B cell (primary cell): ENCODE measurements at regions of chr3 and their contacts with region 1.

Region 1: DNA sequence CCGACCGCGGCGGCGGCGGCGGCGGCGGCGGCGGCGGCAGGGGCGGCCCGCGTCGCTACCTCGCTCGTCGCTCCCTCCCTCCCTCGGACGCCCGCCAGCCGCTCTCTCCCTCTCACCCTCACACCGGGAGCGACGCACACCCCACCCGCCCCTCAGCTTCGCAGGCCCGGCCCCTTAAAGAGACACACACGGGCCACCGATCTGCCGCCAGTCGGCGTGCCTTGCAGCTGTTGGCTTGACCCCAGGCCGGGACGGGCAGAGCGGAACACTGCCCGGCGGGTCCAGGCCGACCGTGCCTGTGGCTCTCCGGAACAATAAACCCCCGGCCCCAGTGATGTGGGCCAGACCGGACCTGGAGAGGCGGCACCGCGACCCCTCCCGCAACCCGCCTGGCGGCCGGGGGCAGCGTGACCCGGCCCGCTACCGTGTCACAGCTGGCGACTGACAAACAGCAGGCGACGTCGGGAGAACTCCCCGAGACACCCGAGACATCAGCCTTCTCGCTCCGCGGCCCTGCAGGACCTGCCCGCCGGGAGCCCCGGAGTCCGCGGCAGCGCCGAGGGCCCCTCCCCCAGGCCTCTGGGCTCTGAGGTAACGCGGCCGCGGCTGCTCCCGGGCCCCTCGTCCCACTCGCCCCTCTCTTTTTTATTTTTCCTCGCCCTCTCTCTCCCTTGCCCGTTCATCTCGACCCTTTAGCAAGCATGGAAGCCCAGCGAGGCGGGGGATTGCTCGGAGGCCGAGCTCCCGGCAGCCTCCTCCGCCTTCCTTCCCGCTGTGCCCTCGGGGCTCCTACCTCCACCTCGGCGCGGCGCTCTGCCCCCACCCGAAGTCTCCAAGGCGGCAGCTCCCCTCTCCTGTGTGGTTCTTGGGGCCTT is at the start of gene SETD2:
- DNase-seq: peak; percentile 92
- ATAC-seq: peak; percentile 85
- H3K4me3 ChIP-seq: peak within 1 kb of the TSS; percentile 77 to 94 (median 90)
- H3K4me3 Mint-ChIP-seq: peak within 1 kb of the TSS; percentile 96
- H3K27ac ChIP-seq: peak within 1 kb of the TSS; percentile 72 to 93
- H3K27ac Mint-ChIP-seq: peak within 1 kb of the TSS; percentile 97
- H3K4me1 ChIP-seq: peaks cover 33 to 44% of the 10 kb centered on the region in 2 donors
- H3K4me1 Mint-ChIP-seq: peaks cover 43% of the 10 kb centered on the region
- H3K27me3 ChIP-seq: no peaks in the 10 kb centered on the region
- H3K27me3 Mint-ChIP-seq: no peaks in the 10 kb centered on the region
- CTCF ChIP-seq: peak; percentile 51
- total RNA-seq, gene SETD2: 91.4 and 98.9 TPM in 2 replicates

Region 2: GRCh38 chr3:47009225-47010110 is 154.8 kb before region 1 on chr3:
- CTCF ChIA-PET with region 1: no interaction called
- POLR2A ChIA-PET with region 1: no interaction called
- intact Hi-C with region 1: loop called (anchors 1 kb)
- DNase-seq: peak; percentile 88
- ATAC-seq: peak; percentile 97
- H3K4me3 ChIP-seq: peak overlapping the region in 4 of 5 experiments; percentile 50 to 68 (median 64)
- H3K4me3 Mint-ChIP-seq: peak overlapping the region; percentile 86
- H3K27ac ChIP-seq: peak overlapping the region; percentile 24 to 90
- H3K27ac Mint-ChIP-seq: peak overlapping the region; percentile 86
- H3K4me1 ChIP-seq: peaks cover 6 to 17% of the 10 kb centered on the region in 2 donors
- H3K4me1 Mint-ChIP-seq: peaks cover 10% of the 10 kb centered on the region
- H3K27me3 ChIP-seq: no peaks in the 10 kb centered on the region
- H3K27me3 Mint-ChIP-seq: no peaks in the 10 kb centered on the region
- CTCF ChIP-seq: no peak

Region 3: GRCh38 chr3:47113669-47114365 is 50.4 kb before region 1 on chr3:
- CTCF ChIA-PET with region 1: interaction called, 4 read pairs
- POLR2A ChIA-PET with region 1: no interaction called
- intact Hi-C with region 1: loop called (anchors 5 kb)
- DNase-seq: peak; percentile 52
- ATAC-seq: peak; percentile 79
- H3K4me3 ChIP-seq: no peak overlapping the region
- H3K4me3 Mint-ChIP-seq: peak overlapping the region; percentile 26
- H3K27ac ChIP-seq: peak overlapping the region in 1 of 2 donors; percentile 11
- H3K27ac Mint-ChIP-seq: peak overlapping the region; percentile 62
- H3K4me1 ChIP-seq: peaks cover 10 to 12% of the 10 kb centered on the region in 2 donors
- H3K4me1 Mint-ChIP-seq: peaks cover 22% of the 10 kb centered on the region
- H3K27me3 ChIP-seq: no peaks in the 10 kb centered on the region
- H3K27me3 Mint-ChIP-seq: no peaks in the 10 kb centered on the region
- CTCF ChIP-seq: no peak

Region 4: DNA sequence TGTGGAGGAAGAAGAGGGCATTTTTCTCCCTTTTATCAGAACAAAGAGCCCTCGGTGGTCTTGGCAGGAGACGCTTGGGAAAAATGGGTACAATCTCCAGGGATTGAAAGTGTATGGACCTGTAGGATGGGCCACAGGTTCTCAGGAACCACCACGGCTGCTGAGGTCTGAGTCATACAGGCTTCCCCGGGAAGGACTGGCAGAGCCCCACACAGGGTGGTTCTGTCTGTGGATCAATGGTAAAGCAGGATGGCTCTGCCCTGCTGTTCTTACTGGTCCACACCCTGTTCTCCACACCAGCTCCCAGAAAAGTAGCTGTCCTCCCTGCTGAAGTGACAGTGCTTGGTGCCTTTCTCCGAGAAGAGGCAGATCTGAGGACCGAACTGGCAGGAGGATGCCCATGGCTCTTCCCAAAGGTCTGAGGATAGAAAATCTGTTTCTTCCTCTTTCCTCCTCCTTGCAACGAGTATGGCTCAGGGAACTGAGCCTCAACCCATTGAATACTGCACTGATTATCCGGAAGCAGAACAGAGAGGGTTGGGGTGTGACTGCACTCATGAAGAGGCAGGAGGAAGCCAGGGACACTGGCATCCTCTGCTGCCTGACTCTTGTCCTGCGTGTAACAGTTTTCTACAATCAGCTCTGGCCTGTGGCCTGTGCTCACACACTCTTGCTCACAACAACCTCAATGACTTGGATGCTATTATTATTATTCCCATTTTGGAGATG is 79.3 kb after region 1 on chr3:
- CTCF ChIA-PET with region 1: no interaction called
- POLR2A ChIA-PET with region 1: no interaction called
- intact Hi-C with region 1: no loop called
- DNase-seq: no peak
- ATAC-seq: no peak
- H3K4me3 ChIP-seq: no peak overlapping the region
- H3K4me3 Mint-ChIP-seq: no peak overlapping the region
- H3K27ac ChIP-seq: no peak overlapping the region
- H3K27ac Mint-ChIP-seq: no peak overlapping the region
- H3K4me1 ChIP-seq: no peaks in the 10 kb centered on the region
- H3K4me1 Mint-ChIP-seq: no peaks in the 10 kb centered on the region
- H3K27me3 ChIP-seq: no peaks in the 10 kb centered on the region
- H3K27me3 Mint-ChIP-seq: no peaks in the 10 kb centered on the region
- CTCF ChIP-seq: no peak

Region 5: DNA sequence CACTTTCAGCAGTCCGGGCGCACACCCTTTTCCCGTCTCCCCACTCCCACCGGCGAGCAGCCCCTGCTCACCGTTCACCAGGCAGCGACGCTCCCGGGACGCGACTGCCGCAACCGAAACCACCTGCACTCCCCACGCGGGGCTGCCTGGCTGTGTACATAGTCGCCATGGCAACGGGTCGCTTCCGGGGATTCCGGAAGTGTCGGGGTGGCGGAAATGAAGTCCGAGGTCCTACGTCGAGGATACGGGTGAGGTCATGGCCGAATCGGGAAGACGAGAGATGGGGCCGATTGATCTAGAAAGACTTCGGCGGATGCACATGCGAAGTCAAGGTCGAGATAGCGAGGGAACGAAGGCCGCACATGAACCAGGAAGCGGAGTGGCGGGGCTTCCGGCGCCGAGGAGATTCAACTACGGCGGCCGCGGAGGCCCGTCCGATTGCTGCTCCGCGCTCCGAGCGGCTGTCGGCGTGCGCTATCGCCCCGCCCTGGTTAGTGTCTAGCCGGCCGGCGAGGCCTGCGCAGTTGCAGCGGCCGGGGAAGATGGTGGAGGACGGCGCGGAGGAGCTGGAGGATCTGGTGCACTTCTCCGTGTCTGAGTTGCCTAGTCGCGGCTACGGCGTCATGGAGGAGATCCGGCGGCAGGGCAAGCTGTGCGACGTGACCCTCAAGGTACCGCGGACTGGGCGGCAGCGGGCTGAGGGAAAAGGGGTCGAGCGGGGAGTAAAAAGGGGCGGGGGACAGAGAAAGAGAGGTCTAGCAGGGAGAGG is 118.4 kb after region 1 on chr3 and contains the starts of genes KIF9 and KLHL18:
- CTCF ChIA-PET with region 1: interaction called, 5 read pairs
- POLR2A ChIA-PET with region 1: interaction called, 6 read pairs
- intact Hi-C with region 1: loop called (anchors 1 kb)
- DNase-seq: peak; percentile 100
- ATAC-seq: peak; percentile 85
- H3K4me3 ChIP-seq: peak within 1 kb of the TSS; percentile 74 to 98 (median 89)
- H3K4me3 Mint-ChIP-seq: peak within 1 kb of the TSS; percentile 99
- H3K27ac ChIP-seq: peak within 1 kb of the TSS; percentile 99
- H3K27ac Mint-ChIP-seq: peak within 1 kb of the TSS; percentile 100
- H3K4me1 ChIP-seq: peaks cover 33 to 49% of the 10 kb centered on the region in 2 donors
- H3K4me1 Mint-ChIP-seq: peaks cover 45% of the 10 kb centered on the region
- H3K27me3 ChIP-seq: no peaks in the 10 kb centered on the region
- H3K27me3 Mint-ChIP-seq: no peaks in the 10 kb centered on the region
- CTCF ChIP-seq: no peak
- total RNA-seq, gene KIF9: 1.3 and 3.0 TPM in 2 replicates
- total RNA-seq, gene KLHL18: 30.9 and 33.0 TPM in 2 replicates

Region 6: GRCh38 chr3:47370887-47371697 is 206.8 kb after region 1 on chr3:
- CTCF ChIA-PET with region 1: interaction called, 5 read pairs
- POLR2A ChIA-PET with region 1: no interaction called
- intact Hi-C with region 1: loop called (anchors 2 kb)
- DNase-seq: peak; percentile 57
- ATAC-seq: peak; percentile 43
- H3K4me3 ChIP-seq: no peak overlapping the region
- H3K4me3 Mint-ChIP-seq: no peak overlapping the region
- H3K27ac ChIP-seq: no peak overlapping the region
- H3K27ac Mint-ChIP-seq: no peak overlapping the region
- H3K4me1 ChIP-seq: no peaks in the 10 kb centered on the region
- H3K4me1 Mint-ChIP-seq: no peaks in the 10 kb centered on the region
- H3K27me3 ChIP-seq: peaks cover 0 to 6% (median 0%) of the 10 kb centered on the region in 4 experiments
- H3K27me3 Mint-ChIP-seq: no peaks in the 10 kb centered on the region
- CTCF ChIP-seq: peak; percentile 67

Region 7: DNA sequence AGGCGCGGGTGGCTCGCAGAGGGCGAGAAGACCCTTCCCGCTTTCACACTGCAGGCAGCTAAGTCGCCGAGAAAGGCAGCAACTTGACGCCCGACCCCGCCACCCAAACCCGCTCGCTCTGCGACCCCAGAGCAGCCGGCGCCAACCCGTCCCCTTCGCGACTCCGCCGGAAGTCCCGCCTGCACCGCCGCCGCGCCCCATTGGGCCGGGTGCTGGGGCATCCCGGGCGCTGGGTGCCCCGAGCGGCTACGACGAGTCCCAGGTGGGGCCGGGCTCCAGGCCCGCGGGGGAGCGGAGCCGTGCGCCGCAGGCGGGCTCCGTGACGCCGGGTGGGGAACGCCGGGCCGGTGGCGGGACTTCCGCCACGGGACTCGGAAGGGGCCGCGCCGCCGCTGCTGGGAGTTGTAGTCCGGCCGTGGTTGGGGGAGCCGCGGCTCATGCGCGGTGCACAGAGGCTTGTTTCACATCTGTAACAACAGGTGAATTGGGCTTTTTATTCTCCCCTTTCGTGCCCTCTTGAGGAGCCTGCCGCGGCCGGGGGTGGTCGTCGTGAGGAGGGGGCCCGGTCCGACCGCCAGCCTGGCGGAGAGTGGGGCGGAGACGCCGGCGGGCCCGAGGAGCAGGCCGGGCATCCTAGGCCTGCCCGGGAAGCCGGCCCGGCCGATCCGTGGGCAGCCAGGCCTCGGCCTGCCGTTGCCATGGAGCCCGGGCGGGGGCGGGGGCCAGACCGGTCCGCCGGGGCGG is 638.7 kb after region 1 on chr3 and contains the start of gene DHX30:
- CTCF ChIA-PET with region 1: no interaction called
- POLR2A ChIA-PET with region 1: no interaction called
- intact Hi-C with region 1: no loop called
- DNase-seq: peak; percentile 91
- ATAC-seq: peak; percentile 91
- H3K4me3 ChIP-seq: peak within 1 kb of the TSS; percentile 57 to 84 (median 78)
- H3K4me3 Mint-ChIP-seq: peak within 1 kb of the TSS; percentile 95
- H3K27ac ChIP-seq: peak within 1 kb of the TSS; percentile 66 to 90
- H3K27ac Mint-ChIP-seq: peak within 1 kb of the TSS; percentile 92
- H3K4me1 ChIP-seq: peaks cover 8 to 13% of the 10 kb centered on the region in 2 donors
- H3K4me1 Mint-ChIP-seq: peaks cover 12% of the 10 kb centered on the region
- H3K27me3 ChIP-seq: no peaks in the 10 kb centered on the region
- H3K27me3 Mint-ChIP-seq: no peaks in the 10 kb centered on the region
- CTCF ChIP-seq: no peak
- total RNA-seq, gene DHX30: 81.8 and 88.9 TPM in 2 replicates